CD14-positive monocyte (primary cell): ENCODE measurements at regions of chr14 and their contacts with region 1.

Region 1: DNA sequence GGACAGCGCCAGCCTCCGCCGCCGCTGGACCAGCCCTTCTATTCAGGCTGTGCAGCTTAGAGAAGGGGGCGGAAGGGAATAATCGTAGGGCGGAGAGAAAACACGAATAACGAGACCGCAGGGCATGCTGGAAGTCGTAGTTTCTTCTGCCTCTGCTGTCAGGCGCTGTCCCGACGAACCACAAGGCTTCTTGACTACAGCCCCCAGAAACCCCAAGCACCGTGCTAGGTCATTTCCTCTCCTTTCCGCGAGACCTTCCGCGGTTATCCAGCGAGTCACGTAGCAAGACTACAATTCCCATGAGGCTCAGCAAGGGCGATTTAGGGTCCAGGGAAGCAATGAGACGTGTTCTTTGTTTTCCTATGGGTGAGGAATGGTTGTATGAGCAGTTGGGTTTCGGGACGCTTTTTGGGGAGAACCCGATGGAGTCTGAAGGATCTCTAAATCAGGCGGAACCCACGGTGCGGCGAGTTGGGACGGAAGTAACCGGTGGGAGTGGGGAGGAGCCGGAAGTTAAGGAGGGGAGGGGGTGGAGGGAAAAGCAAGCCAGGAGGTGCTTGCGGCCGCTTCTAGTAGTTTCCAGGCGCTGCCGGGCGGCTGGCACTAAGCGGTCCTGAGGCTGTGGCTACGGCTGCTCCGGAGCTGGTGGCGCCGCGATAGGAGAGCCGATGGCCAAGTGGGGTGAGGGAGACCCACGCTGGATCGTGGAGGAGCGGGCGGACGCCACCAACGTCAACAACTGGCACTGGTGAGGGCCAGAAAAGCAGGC is at the starts of genes AHSA1 and VIPAS39:
- DNase-seq: peak; percentile 96 to 98 (median 97)
- H3K4me3 ChIP-seq: peak within 1 kb of the TSS; percentile 80 to 92 (median 87)
- H3K4me3 Mint-ChIP-seq: peak within 1 kb of the TSS; percentile 100
- H3K27ac ChIP-seq: peak within 1 kb of the TSS; percentile 66 to 85
- H3K27ac Mint-ChIP-seq: peak within 1 kb of the TSS; percentile 96 to 100 (median 99)
- H3K4me1 ChIP-seq: peaks cover 19 to 31% of the 10 kb centered on the region in 2 donors
- H3K4me1 Mint-ChIP-seq: peaks cover 25% of the 10 kb centered on the region
- H3K27me3 ChIP-seq: no peaks in the 10 kb centered on the region
- H3K27me3 Mint-ChIP-seq: no peaks in the 10 kb centered on the region
- CTCF ChIP-seq: no peak
- polyA plus RNA-seq, gene AHSA1: 59.5 to 72.5 (median 71.5) TPM
- polyA plus RNA-seq, gene VIPAS39: 8.1 to 17.8 (median 10.8) TPM

Region 2: DNA sequence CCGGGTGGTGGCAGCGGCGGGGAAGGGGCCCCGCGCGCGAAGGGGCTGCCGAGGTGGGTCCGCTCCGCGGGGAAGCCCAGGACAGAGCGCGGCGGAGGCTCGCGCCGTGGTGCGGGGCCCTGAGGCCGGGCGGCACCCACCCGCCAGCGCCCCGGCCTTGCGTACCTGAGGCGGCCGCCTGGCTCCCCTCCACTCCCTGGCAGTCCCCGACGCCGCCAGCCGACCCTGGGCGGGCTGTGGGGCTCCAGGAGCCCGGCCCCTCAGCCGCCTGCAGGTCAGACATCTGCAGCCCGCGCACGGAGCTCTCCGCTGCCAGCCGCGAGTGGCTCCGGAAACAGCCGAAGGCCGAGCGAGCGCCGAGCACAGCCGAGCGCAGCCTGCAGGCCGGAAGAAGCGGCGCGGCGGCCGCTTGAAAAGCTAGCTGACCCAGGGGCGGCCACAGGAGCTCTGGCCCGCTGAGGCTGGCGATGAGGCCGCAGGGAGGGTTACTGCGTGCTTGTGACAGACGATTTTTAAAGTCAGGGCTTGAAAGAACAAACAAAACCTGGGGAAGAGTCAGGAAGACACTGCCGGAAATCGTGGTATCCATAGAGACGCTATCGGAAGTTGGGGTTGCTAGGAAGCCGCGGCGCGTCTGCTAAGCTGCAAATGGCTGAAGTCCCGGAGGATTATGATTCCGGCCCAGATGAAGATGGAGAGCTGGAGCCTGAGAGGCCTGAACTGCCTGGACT is 80.8 kb before region 1 on chr14 and contains the starts of genes SAMD15 and TMED8:
- intact Hi-C with region 1: loop called (anchors 5 kb)
- DNase-seq: peak; percentile 63 to 71 (median 70)
- H3K4me3 ChIP-seq: peak within 1 kb of the TSS; percentile 75 to 99 (median 89)
- H3K4me3 Mint-ChIP-seq: peak within 1 kb of the TSS; percentile 88 to 95
- H3K27ac ChIP-seq: peak within 1 kb of the TSS; percentile 18 to 79
- H3K27ac Mint-ChIP-seq: peak within 1 kb of the TSS; percentile 43 to 93 (median 87)
- H3K4me1 ChIP-seq: peaks cover 42 to 45% of the 10 kb centered on the region in 2 donors
- H3K4me1 Mint-ChIP-seq: peaks cover 41% of the 10 kb centered on the region
- H3K27me3 ChIP-seq: no peaks in the 10 kb centered on the region
- H3K27me3 Mint-ChIP-seq: peaks cover 0 to 2% (median 0%) of the 10 kb centered on the region in 3 donors
- CTCF ChIP-seq: no peak
- polyA plus RNA-seq, gene SAMD15: 0.08 to 0.65 TPM in 2 of 3 donors, not detected in the other
- polyA plus RNA-seq, gene TMED8: 5.4 to 6.2 (median 6.1) TPM